K562 (cell line): ENCODE measurements at regions of chr1 and their contacts with region 1.

Region 1: DNA sequence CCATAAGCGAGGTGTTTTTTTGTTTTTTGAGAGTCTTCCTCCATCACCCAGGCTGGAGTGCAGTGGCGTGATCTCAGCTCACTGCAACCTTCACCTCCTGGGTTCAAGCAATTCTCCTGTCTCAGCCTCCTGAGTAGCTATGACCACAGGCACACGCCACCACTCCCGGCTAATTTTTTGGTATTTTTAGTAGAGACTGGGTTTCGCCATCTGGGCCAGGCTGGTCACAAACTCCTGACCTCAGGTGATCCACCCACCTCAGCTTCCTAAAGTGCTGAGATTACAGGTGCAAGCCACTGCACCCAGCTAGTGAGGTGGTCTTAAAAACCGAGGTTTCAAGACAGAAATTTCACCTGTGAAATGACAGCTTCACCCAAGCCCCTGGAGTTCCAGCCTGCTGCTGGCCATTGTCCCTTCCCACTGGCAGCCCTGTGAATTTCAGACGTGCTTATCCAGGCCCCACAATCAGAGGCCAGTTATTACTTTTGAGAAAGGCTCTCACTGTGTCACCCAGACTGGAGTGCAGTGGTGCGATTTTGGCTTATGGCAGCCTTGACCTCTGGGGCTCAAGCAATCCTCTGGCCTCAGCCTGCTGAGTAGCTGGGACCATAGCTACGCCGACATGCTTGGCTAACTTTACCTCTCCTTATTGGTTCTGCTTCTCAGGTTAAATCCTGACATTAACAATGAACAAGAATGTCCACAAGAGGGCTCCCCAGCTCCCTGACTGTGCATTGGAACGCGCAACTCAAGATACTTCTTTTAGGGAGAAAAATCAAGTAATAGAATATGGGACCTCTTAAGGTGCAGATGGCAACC is 19.4 kb downstream of the ENO1 start:
- DNase-seq: peak; percentile 43 to 83 (median 58)
- ATAC-seq: peak; percentile 74
- H3K4me3 ChIP-seq: no peak overlapping the region
- H3K27ac ChIP-seq: peak overlapping the region; percentile 48; the same call in 2 of the 3 replicates
- H3K4me1 ChIP-seq: peaks cover 13% of the 10 kb centered on the region in 2 experiments
- H3K27me3 ChIP-seq: no peaks in the 10 kb centered on the region
- CTCF ChIP-seq: peak; percentile 75 to 88 (median 86)
- EP300 ChIP-seq: no peak
- POLR2A ChIP-seq: peak; percentile 61; the same call in 1 of the 2 replicates
- RAD21 ChIP-seq: peak; percentile 41 to 72

Region 2: DNA sequence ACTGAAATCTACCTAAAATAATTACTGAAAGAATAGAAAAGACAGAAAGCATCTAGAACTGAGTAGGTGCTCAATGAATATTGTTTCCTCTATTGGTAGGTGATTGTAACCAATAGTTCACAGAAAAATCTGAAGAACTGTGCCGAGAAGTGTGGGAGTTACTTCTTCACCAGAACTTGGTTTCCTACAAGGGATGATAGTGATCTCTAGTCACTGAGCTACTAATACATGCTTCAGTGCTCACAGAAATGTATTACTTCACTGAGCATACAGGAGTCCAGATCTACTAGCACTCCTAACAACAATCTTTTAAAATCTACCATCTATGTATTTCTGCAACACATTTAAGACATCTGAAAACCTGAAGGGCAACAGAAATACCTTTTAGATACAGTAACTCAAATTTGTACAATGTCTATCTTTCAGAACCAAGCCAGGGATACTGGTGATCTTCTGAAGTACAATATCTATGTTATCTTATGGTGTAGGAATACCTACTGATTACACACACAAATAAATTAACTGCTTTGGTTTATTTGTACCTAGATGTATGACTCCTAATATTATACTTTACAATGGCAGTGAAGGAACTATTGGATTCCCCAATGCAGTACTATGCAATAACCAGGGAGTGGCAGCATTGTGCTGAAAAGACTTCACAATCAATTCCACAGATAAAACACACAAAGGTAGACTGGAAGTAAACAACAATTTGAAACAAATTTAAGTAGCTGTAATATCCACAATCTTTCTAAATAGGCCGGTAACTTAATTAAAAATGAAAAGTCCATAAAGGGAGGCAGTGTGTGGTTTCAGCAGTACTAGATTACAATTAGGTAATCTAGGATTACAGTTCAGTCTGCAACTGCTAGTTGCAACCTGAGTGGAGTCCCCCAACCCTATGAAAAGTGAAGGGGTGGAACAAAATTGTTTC is 298.2 kb before region 1 on chr1:
- CTCF ChIA-PET with region 1: interaction called, 4 read pairs
- POLR2A ChIA-PET with region 1: interaction called, 5 read pairs
- in situ Hi-C with region 1: loop called (anchors 5 kb)
- intact Hi-C with region 1: no loop called
- DNase-seq: peak; percentile 52 to 69 (median 55)
- ATAC-seq: peak; percentile 80
- H3K4me3 ChIP-seq: no peak overlapping the region
- H3K27ac ChIP-seq: no peak overlapping the region
- H3K4me1 ChIP-seq: peaks cover 0 to 19% of the 10 kb centered on the region in 2 experiments; a peak in 4 of 5 replicates
- H3K27me3 ChIP-seq: no peaks in the 10 kb centered on the region
- CTCF ChIP-seq: peak; percentile 72 to 98 (median 88)
- EP300 ChIP-seq: 0 out of 2 replicates have a peak, but pooled peaks have one; percentile 2
- POLR2A ChIP-seq: no peak
- RAD21 ChIP-seq: peak; percentile 96 to 99

Region 3: GRCh38 chr1:8782001-8782620 is 77.0 kb before region 1 on chr1:
- CTCF ChIA-PET with region 1: no interaction called
- POLR2A ChIA-PET with region 1: no interaction called
- in situ Hi-C with region 1: no loop called
- intact Hi-C with region 1: no loop called
- DNase-seq: no peak
- ATAC-seq: peak; percentile 17
- H3K4me3 ChIP-seq: no peak overlapping the region
- H3K27ac ChIP-seq: no peak overlapping the region; the same call in 2 of the 3 replicates
- H3K4me1 ChIP-seq: peaks cover 5 to 14% of the 10 kb centered on the region in 2 experiments
- H3K27me3 ChIP-seq: no peaks in the 10 kb centered on the region
- CTCF ChIP-seq: no peak
- EP300 ChIP-seq: no peak
- POLR2A ChIP-seq: no peak
- RAD21 ChIP-seq: no peak

Region 4: GRCh38 chr1:8873506-8874229 is 14.6 kb after region 1 on chr1:
- CTCF ChIA-PET with region 1: no interaction called
- POLR2A ChIA-PET with region 1: interaction called, 219 read pairs
- in situ Hi-C with region 1: no loop called
- intact Hi-C with region 1: no loop called
- DNase-seq: peak; percentile 80 to 92 (median 84)
- ATAC-seq: peak; percentile 64
- H3K4me3 ChIP-seq: peak overlapping the region; percentile 82
- H3K27ac ChIP-seq: peak overlapping the region; percentile 74
- H3K4me1 ChIP-seq: peaks cover 20 to 29% of the 10 kb centered on the region in 2 experiments; a peak in 4 of 5 replicates
- H3K27me3 ChIP-seq: no peaks in the 10 kb centered on the region
- CTCF ChIP-seq: no peak
- EP300 ChIP-seq: 0 out of 2 replicates have a peak, but pooled peaks have one; percentile 63
- POLR2A ChIP-seq: peak; percentile 41; the same call in 1 of the 2 replicates
- RAD21 ChIP-seq: no peak

Region 5: GRCh38 chr1:8903908-8904650 is 45.0 kb after region 1 on chr1:
- CTCF ChIA-PET with region 1: no interaction called
- POLR2A ChIA-PET with region 1: interaction called, 3 read pairs
- in situ Hi-C with region 1: no loop called
- intact Hi-C with region 1: loop called (anchors 10 kb)
- DNase-seq: no peak
- ATAC-seq: no peak
- H3K4me3 ChIP-seq: no peak overlapping the region
- H3K27ac ChIP-seq: no peak overlapping the region
- H3K4me1 ChIP-seq: peaks cover 9 to 15% of the 10 kb centered on the region in 2 experiments
- H3K27me3 ChIP-seq: no peaks in the 10 kb centered on the region
- CTCF ChIP-seq: no peak
- EP300 ChIP-seq: no peak
- POLR2A ChIP-seq: no peak
- RAD21 ChIP-seq: no peak

Region 6: DNA sequence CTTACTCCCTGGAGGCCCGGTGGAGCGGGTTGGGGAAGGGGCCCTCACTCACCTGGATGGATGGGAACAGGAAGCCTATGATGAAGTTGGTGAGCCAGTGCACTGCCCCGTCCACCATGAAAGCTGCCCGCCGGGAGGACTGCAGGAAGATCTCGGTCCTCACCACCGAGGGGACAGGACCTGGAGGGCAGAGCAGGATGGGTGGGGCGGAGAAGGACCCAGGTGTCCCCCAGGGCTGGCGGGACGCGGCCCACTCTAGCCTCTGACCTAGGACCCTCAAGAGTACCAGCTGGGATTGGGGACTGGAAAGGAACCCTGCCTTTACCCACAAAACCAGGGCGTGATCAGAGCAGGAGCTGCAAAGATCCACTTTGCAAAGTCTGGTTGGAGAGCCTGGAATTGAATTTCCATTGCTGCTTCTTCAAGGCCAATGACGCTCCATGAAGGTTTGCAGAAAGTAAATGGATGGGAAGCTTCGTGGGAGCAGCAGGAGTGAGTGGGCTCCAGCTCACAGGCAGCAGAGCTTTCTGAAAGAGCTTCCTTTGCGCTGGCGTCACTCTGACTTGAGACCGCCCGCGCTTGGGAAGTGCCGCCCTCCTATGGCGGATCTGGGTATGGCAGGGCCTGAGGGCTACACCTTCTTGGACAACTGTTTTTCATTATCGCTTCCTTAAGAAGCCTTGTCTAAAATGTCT is 145.8 kb after region 1 on chr1:
- CTCF ChIA-PET with region 1: interaction called, 10 read pairs
- POLR2A ChIA-PET with region 1: interaction called, 9 read pairs
- in situ Hi-C with region 1: no loop called
- intact Hi-C with region 1: no loop called
- DNase-seq: peak; percentile 86 to 91 (median 90)
- ATAC-seq: peak; percentile 96
- H3K4me3 ChIP-seq: no peak overlapping the region
- H3K27ac ChIP-seq: no peak overlapping the region
- H3K4me1 ChIP-seq: peaks cover 0 to 6% of the 10 kb centered on the region in 2 experiments; a peak in 2 of 5 replicates
- H3K27me3 ChIP-seq: peaks cover 46 to 79% of the 10 kb centered on the region in 2 experiments
- CTCF ChIP-seq: peak; percentile 93 to 98 (median 98)
- EP300 ChIP-seq: no peak
- POLR2A ChIP-seq: no peak
- RAD21 ChIP-seq: peak; percentile 59 to 83

Region 7: DNA sequence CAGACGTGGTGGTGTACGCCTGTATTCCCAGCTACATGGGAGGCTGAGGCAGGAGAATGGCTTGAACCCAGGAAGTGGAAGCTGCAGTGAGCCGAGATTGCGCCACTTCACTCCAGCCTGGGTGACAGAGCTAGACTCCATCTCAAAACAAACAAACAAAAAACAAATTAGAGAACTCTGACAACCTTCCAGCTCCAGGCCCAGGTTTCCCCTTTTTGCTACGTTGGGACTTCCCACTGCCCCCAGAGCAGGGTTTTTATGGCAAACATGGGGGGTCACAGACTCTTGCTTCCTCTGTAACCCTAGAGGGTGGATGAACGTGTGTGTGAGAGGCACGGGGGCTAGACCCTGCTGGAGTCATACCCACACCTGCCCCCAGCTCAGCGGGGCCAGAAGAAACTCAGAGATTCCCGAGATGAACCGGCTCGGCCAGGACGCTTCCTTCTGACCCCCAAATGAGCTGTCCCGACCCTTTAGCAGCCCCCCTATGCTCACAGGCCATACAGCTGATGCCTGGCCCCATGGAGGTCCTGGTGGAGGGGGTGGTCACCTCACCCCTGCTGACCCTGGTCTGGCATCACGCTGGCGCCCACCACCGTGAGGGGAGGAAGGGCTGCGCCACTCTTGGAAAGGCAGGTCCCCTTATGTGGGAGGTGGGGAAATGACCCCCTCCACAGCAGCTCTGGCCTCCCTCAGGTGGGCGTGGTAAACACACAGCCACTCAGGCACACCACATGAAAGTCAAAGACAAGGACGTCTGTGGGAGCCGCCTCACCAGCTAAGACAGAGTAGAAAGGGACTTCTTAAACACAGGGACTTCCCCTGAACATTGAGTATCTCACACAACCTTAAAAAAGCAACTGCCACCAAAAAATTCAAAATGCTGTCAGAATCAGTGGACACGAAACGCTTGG is 262.7 kb after region 1 on chr1:
- CTCF ChIA-PET with region 1: no interaction called
- POLR2A ChIA-PET with region 1: no interaction called
- in situ Hi-C with region 1: no loop called
- intact Hi-C with region 1: no loop called
- DNase-seq: no peak
- ATAC-seq: peak; percentile 49
- H3K4me3 ChIP-seq: no peak overlapping the region
- H3K27ac ChIP-seq: no peak overlapping the region
- H3K4me1 ChIP-seq: peaks cover 0 to 4% of the 10 kb centered on the region in 2 experiments; a peak in 1 of 5 replicates
- H3K27me3 ChIP-seq: peaks cover 17 to 44% of the 10 kb centered on the region in 2 experiments; a peak in 4 of 5 replicates
- CTCF ChIP-seq: no peak
- EP300 ChIP-seq: no peak
- POLR2A ChIP-seq: no peak
- RAD21 ChIP-seq: no peak

Region 8: GRCh38 chr1:9413148-9413876 is 554.2 kb after region 1 on chr1:
- CTCF ChIA-PET with region 1: no interaction called
- POLR2A ChIA-PET with region 1: no interaction called
- in situ Hi-C with region 1: no loop called
- intact Hi-C with region 1: no loop called
- DNase-seq: peak in 2 of 4 experiments; percentile 61 to 64
- ATAC-seq: peak; percentile 80
- H3K4me3 ChIP-seq: no peak overlapping the region
- H3K27ac ChIP-seq: no peak overlapping the region
- H3K4me1 ChIP-seq: peaks cover 0 to 17% of the 10 kb centered on the region in 2 experiments; a peak in 3 of 5 replicates
- H3K27me3 ChIP-seq: peaks cover 26 to 51% of the 10 kb centered on the region in 2 experiments; a peak in 4 of 5 replicates
- CTCF ChIP-seq: no peak
- EP300 ChIP-seq: no peak
- POLR2A ChIP-seq: no peak
- RAD21 ChIP-seq: no peak

Region 9: GRCh38 chr1:9561429-9561828 is 702.3 kb after region 1 on chr1:
- CTCF ChIA-PET with region 1: no interaction called
- POLR2A ChIA-PET with region 1: no interaction called
- in situ Hi-C with region 1: no loop called
- intact Hi-C with region 1: no loop called
- DNase-seq: peak; percentile 33 to 56 (median 48)
- ATAC-seq: peak; percentile 72
- H3K4me3 ChIP-seq: no peak overlapping the region
- H3K27ac ChIP-seq: no peak overlapping the region
- H3K4me1 ChIP-seq: peaks cover 3 to 8% of the 10 kb centered on the region in 2 experiments; a peak in 2 of 5 replicates
- H3K27me3 ChIP-seq: no peaks in the 10 kb centered on the region
- CTCF ChIP-seq: no peak; a peak in 1 of 6 replicates
- EP300 ChIP-seq: 0 out of 2 replicates have a peak, but pooled peaks have one; percentile 1
- POLR2A ChIP-seq: no peak
- RAD21 ChIP-seq: no peak